ENCODE measurements at regions of chr3 and their contacts with region 1.

Region 1: GRCh38 chr3:11651900-11652299 is 8.2 kb upstream of the VGLL4 start:
- DNase-seq: no peak
- H3K4me3 ChIP-seq: no peak overlapping the region
- H3K27ac ChIP-seq: no peak overlapping the region
- H3K4me1 ChIP-seq: no peaks in the 10 kb centered on the region
- H3K27me3 ChIP-seq: no peaks in the 10 kb centered on the region
- CTCF ChIP-seq: peak; percentile 48

Region 2: GRCh38 chr3:11379233-11379823 is 272.6 kb before region 1 on chr3:
- intact Hi-C with region 1: loop called (anchors 5 kb)
- DNase-seq: no peak
- H3K4me3 ChIP-seq: no peak overlapping the region
- H3K27ac ChIP-seq: no peak overlapping the region
- H3K4me1 ChIP-seq: no peaks in the 10 kb centered on the region
- H3K27me3 ChIP-seq: no peaks in the 10 kb centered on the region
- CTCF ChIP-seq: peak; percentile 44

Region 3: DNA sequence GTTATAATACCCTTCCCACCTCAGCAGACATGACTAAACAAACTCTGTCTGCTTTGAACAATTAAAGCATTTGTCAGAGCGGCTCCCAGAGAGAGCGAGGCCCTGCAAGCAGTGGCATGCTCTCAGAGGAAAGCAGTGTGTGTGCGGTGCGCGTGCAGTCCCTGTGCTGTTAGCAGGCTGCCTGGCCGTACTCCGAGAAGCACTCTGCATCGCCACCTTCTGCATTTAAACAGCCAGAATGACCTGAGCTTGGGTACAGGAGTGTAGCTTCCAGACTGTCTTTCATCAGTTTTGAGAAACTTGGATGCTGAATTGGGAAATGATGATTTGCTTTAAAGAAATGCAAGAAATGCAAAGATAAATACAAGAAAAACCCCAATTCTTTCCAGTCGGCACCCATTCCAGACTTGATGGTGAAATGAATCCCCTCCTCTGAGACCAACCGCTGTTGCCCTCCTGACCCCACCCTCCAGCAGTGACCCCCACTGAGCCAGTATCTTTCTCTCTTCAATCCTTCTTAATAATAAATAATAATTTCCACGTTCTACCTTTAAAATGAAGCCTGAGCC is 121.7 kb before region 1 on chr3:
- intact Hi-C with region 1: no loop called
- DNase-seq: no peak
- H3K4me3 ChIP-seq: no peak overlapping the region
- H3K27ac ChIP-seq: no peak overlapping the region
- H3K4me1 ChIP-seq: no peaks in the 10 kb centered on the region
- H3K27me3 ChIP-seq: no peaks in the 10 kb centered on the region
- CTCF ChIP-seq: no peak

Region 4: DNA sequence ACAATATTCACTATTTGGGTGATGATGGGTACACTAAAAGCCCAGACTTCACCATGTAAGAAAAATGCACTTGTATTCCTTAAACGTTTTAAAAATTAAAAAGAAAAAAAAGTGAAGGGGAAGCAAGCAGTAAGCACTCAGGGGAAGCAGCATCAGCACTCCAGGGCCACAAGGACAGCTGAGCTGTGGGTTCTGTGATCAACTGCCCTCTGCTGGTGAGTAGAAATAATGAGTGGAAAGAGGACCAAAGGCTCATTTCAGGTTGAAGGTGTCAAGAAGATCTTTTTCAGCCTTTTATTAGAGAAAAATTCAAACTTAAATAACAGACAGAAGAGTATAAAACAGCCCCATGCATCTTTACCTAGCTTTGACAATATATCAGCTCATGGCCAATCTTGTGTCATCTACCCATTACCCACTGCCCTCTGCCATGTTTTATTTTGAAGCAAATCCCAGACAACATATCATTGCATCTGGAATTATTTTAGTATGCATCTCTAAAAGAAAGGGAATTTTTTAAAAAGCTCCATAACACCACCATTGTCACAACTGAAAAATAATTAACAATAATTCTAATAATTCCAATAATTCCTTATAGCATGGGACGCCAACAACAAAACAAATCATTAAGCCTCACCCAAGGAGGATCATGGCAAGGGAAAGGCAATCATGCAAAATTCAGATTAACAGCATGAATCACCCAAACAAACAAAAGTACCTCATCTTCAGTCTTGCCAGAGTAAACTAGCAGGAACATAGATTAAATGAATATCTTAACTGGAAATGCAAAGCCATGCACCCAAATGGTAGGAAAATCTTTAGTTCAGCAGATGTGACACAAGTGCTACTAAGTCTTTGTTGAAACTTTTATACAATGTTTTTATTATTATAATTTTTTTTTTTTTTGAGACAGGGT is 152.3 kb after region 1 on chr3:
- intact Hi-C with region 1: loop called (anchors 10 kb)
- DNase-seq: peak; percentile 39
- H3K4me3 ChIP-seq: no peak overlapping the region
- H3K27ac ChIP-seq: no peak overlapping the region
- H3K4me1 ChIP-seq: no peaks in the 10 kb centered on the region
- H3K27me3 ChIP-seq: no peaks in the 10 kb centered on the region
- CTCF ChIP-seq: peak; percentile 67

Measured in colonic mucosa (tissue), 4 donors.